Activated CD8-positive, alpha-beta T cell treated with anti-CD3 and anti-CD28 coated beads for 36 hours (primary cell): ENCODE measurements at regions of chr11 and their contacts with region 1.

Region 1: DNA sequence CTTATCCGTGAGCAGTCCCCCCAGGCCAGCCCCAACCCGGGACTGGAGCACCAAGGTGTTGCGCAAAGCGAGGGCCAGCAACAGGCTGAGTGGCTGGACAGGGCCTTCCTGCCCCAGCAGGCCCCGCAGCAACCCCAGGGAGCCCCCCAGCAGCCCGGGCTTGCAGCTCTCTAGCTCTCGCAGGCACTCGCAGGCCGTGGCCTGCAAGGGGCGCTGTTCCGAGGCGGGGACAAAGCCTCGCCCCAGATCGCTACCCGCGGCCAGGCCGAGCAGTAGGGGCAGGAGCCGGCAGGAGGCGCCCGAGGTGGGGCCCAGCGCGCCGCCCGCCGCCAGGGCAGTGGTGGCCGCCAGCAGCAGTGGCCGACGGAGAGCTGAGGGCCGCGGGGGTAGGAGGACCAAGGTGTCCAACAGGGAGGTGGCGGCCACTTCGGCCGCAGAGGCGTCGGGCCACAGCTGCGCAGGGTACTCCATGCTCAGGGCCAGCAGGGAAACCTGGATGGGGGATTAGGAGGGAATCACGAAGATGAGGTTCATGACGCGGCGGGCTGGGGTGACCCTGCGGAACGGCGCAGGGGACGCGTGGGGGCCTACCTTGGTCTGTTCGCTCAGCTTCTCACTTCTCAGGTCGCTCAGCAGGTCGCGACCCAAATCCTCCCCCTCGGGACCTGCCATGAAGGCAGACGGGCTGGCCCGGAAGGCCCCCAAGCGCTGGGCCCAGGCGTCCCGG is 762 bp downstream of the AP5B1 start:
- DNase-seq: peak; percentile 91
- ATAC-seq: peak; percentile 85
- H3K4me3 Mint-ChIP-seq: peak overlapping the region; percentile 89
- H3K27ac Mint-ChIP-seq: peak overlapping the region; percentile 89
- H3K4me1 Mint-ChIP-seq: peaks cover 24% of the 10 kb centered on the region
- H3K27me3 Mint-ChIP-seq: peaks cover 5% of the 10 kb centered on the region
- CTCF ChIP-seq: peak; percentile 100

Region 2: GRCh38 chr11:65726660-65727059 is 53.4 kb before region 1 on chr11:
- CTCF ChIA-PET with region 1: interaction called, 11 read pairs
- POLR2A ChIA-PET with region 1: interaction called, 9 read pairs
- intact Hi-C with region 1: no loop called
- DNase-seq: no peak
- ATAC-seq: no peak
- H3K4me3 Mint-ChIP-seq: no peak overlapping the region
- H3K27ac Mint-ChIP-seq: no peak overlapping the region
- H3K4me1 Mint-ChIP-seq: no peaks in the 10 kb centered on the region
- H3K27me3 Mint-ChIP-seq: peaks cover 1% of the 10 kb centered on the region
- CTCF ChIP-seq: no peak

Region 3: DNA sequence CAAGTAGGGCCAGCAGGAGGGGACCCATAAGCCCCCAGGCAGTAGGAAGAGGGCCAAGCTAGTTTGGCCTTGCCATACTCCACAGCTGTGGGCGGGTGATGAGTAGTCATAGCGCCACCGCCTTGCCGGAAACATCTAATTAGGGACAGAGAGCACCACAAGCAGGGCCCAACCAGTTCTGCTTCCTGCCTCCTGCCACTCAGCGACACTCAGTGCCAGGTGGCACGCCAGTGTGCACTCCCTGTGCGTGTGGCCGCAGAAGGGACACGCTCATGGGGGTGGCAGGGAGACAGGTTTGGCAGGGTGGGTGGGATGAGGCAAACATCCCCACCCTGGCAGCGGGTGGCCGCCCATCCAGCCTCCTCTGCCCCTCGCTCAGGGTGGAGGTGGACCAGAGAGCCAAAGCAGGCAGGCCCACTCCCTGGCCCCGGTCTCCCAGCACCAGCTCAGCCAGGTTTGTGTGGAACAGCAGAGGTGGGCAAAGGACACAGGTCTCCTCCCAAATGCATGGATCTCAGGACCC is 11.7 kb after region 1 on chr11:
- CTCF ChIA-PET with region 1: interaction called, 85 read pairs
- POLR2A ChIA-PET with region 1: interaction called, 14 read pairs
- intact Hi-C with region 1: no loop called
- DNase-seq: peak; percentile 89
- ATAC-seq: peak; percentile 96
- H3K4me3 Mint-ChIP-seq: no peak overlapping the region
- H3K27ac Mint-ChIP-seq: peak overlapping the region; percentile 73
- H3K4me1 Mint-ChIP-seq: peaks cover 15% of the 10 kb centered on the region
- H3K27me3 Mint-ChIP-seq: peaks cover 27% of the 10 kb centered on the region
- CTCF ChIP-seq: no peak

Region 4: GRCh38 chr11:65817835-65818742 is 38.1 kb after region 1 on chr11:
- CTCF ChIA-PET with region 1: interaction called, 235 read pairs
- POLR2A ChIA-PET with region 1: interaction called, 15 read pairs
- intact Hi-C with region 1: loop called (anchors 2 kb)
- DNase-seq: peak; percentile 97
- ATAC-seq: peak; percentile 94
- H3K4me3 Mint-ChIP-seq: peak overlapping the region; percentile 72
- H3K27ac Mint-ChIP-seq: peak overlapping the region; percentile 82
- H3K4me1 Mint-ChIP-seq: peaks cover 17% of the 10 kb centered on the region
- H3K27me3 Mint-ChIP-seq: no peaks in the 10 kb centered on the region
- CTCF ChIP-seq: peak; percentile 100

Region 5: DNA sequence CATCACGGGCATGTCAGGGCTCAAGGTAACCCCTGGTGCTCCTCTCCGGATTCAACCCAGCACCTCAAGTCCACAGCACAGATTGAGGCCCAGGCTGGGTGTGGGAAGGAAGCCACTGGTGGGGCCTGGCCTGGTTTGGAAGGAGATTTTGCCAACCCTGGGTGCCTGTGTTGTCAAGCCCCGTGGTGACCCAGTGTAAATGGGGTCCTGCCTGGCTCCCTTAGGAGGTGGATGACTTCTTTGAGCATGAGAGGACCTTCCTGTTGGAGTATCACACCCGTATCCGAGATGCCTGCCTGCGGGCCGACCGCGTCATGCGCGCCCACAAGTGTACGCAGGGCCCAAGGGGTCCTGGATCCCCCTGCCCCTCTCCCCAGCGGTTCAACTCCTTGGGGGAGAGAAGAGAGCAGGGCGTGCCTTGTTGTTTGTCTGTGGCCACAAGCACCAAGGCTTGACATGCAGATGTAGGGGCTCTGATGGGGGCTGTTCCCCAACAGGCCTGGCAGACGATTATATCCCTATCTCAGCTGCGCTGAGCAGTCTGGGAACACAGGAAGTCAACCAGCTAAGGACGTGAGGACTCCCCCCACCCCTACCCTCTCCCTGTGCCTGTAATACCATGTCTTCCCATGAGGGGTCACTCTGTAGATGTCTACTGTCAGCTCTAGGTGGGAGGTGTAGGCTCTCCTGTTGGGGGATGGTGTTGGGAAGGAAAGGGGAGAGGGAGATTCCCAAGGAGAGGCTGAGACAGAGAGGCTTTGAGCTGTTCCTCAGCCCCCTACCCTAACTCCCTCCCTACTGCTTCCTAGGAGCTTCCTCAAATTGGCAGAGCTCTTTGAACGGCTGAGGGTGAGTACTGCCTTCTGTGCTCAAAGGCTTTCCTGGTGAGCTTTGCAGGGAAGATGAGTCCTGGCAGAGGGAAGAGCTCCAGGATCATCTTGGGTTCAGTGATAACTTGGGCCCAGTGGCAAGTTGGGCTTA is 71.1 kb after region 1 on chr11:
- CTCF ChIA-PET with region 1: interaction called, 14 read pairs
- POLR2A ChIA-PET with region 1: interaction called, 5 read pairs
- intact Hi-C with region 1: no loop called
- DNase-seq: peak; percentile 44
- ATAC-seq: peak; percentile 57
- H3K4me3 Mint-ChIP-seq: no peak overlapping the region
- H3K27ac Mint-ChIP-seq: peak overlapping the region; percentile 33
- H3K4me1 Mint-ChIP-seq: peaks cover 24% of the 10 kb centered on the region
- H3K27me3 Mint-ChIP-seq: no peaks in the 10 kb centered on the region
- CTCF ChIP-seq: peak; percentile 72

Region 6: GRCh38 chr11:65988791-65989592 is 209.0 kb after region 1 on chr11:
- CTCF ChIA-PET with region 1: interaction called, 12 read pairs
- POLR2A ChIA-PET with region 1: interaction called, 3 read pairs
- intact Hi-C with region 1: no loop called
- DNase-seq: peak; percentile 98
- ATAC-seq: peak; percentile 99
- H3K4me3 Mint-ChIP-seq: no peak overlapping the region
- H3K27ac Mint-ChIP-seq: peak overlapping the region; percentile 53
- H3K4me1 Mint-ChIP-seq: peaks cover 5% of the 10 kb centered on the region
- H3K27me3 Mint-ChIP-seq: no peaks in the 10 kb centered on the region
- CTCF ChIP-seq: peak; percentile 99